MCF 10A (cell line): ENCODE measurements at regions of chr10 and their contacts with region 1.

Region 1: GRCh38 chr10:101214446-101215396 is 14.5 kb downstream of the LBX1 start:
- DNase-seq: peak; percentile 68
- H3K4me3 Mint-ChIP-seq: peak overlapping the region; percentile 75
- H3K27ac Mint-ChIP-seq: no peak overlapping the region
- H3K4me1 Mint-ChIP-seq: peaks cover 4% of the 10 kb centered on the region
- H3K27me3 Mint-ChIP-seq: peaks cover 49% of the 10 kb centered on the region
- CTCF ChIP-seq: peak; percentile 95

Region 2: GRCh38 chr10:100923580-100923979 is 291.1 kb before region 1 on chr10:
- CTCF ChIA-PET with region 1: no interaction called
- POLR2A ChIA-PET with region 1: no interaction called
- intact Hi-C with region 1: no loop called
- DNase-seq: no peak
- H3K4me3 Mint-ChIP-seq: no peak overlapping the region
- H3K27ac Mint-ChIP-seq: no peak overlapping the region
- H3K4me1 Mint-ChIP-seq: no peaks in the 10 kb centered on the region
- H3K27me3 Mint-ChIP-seq: no peaks in the 10 kb centered on the region
- CTCF ChIP-seq: no peak

Region 3: DNA sequence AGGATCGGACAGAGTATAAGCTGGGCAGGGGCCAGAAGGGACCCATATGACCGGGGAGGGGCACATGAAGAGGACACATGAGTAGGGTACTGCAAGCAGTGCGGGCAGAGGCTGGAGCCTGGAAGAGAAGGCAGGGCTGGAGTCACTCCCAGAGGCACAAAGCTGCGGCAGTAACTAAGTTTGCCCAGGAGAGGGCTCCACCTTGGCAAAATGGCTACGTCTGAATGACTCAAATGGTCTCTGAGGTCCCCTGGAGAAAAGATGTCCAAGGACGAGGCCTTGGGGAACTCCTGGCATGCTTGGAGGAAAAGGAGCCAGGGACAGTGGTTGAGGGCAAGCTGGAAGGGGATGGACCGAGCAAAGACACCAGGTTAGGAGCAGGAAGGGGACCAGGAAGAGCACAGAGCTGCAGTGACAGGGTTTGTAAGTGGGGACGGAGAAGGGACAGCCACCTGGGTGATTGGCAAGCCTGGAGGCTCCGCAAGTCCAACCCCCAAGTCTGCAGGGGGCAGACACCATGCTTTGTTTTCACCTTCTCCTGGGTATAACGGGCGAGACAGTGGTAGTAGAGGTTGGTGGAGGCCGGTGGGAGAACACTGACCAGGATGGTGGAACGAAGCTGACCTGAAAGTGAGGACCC is 57.6 kb after region 1 on chr10:
- CTCF ChIA-PET with region 1: interaction called, 17 read pairs
- POLR2A ChIA-PET with region 1: interaction called, 3 read pairs
- intact Hi-C with region 1: no loop called
- DNase-seq: peak; percentile 77
- H3K4me3 Mint-ChIP-seq: no peak overlapping the region
- H3K27ac Mint-ChIP-seq: no peak overlapping the region
- H3K4me1 Mint-ChIP-seq: peaks cover 19% of the 10 kb centered on the region
- H3K27me3 Mint-ChIP-seq: no peaks in the 10 kb centered on the region
- CTCF ChIP-seq: peak; percentile 73

Region 4: DNA sequence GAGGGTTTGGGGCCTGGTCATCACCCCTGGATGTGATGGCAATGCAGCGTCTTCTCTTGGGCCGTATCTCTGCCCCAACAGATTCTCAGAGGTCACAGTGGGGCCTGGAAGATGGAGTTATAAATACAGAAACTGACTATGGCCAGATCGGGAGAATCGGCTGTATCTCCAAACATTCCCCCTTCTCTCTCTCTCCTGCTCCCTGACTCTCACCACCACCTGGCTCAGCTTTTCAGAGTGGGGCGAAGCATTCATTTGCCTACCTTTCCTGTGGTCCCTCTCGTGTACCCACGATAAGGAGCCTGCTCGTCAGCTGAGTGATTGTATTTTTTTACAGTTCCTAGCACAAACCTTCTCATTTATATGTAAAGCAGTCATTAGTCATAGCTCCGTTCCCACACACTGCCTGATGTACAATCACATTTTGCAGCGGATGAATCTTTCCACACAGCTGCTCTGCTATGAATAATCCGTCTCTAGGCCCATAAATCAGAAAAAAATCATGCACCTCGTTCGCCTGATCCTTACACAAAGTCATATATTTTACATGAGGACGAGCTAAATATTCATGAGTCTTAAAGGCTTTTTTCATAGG is 116.0 kb after region 1 on chr10:
- CTCF ChIA-PET with region 1: interaction called, 16 read pairs
- POLR2A ChIA-PET with region 1: no interaction called
- intact Hi-C with region 1: no loop called
- DNase-seq: peak; percentile 37
- H3K4me3 Mint-ChIP-seq: no peak overlapping the region
- H3K27ac Mint-ChIP-seq: no peak overlapping the region
- H3K4me1 Mint-ChIP-seq: peaks cover 9% of the 10 kb centered on the region
- H3K27me3 Mint-ChIP-seq: peaks cover 26% of the 10 kb centered on the region
- CTCF ChIP-seq: no peak

Region 5: DNA sequence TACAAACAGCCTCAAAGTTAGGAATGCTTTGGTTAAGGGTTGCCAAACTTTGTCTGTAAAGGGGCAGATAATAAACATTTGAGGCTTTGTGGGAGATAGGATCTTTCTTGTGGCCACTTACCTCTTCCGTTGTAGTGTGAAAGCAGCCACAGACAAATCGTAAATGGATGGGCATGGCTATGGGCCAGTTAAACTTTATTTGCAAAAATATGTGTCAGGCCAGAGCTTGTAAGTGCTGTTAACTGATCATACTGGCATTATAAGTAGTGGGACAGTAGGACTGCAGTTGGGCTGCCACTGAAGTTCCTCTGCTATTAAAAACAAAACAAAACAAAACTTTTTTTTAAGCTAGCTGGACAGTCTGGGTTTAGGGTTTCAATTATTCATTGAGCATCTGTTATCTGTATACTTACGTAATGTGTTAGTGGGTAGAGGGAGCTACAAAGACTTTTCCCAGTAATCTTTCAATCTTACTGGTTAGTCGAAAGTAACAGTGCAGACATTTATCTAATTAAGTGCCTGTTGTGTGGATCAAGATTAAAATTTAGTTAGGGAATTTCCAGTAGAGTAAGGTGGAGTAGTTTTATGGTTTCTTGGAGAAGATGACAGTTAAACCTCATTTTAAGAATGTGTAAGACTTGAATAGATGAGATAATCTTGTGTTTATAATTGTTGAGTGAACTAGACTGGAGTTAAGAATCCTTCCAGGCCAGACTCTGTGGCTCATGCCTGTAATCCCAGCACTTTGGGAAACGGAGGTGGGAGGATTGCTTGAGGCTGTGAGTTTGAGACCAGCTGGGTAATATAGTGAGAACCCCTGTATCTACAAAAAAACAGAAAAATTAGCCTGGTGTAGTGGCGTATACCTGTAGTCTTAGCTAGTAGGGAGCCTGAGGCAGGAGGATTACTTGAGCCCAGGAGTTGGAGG is 239.3 kb after region 1 on chr10:
- CTCF ChIA-PET with region 1: interaction called, 13 read pairs
- POLR2A ChIA-PET with region 1: interaction called, 6 read pairs
- intact Hi-C with region 1: no loop called
- DNase-seq: no peak
- H3K4me3 Mint-ChIP-seq: no peak overlapping the region
- H3K27ac Mint-ChIP-seq: no peak overlapping the region
- H3K4me1 Mint-ChIP-seq: peaks cover 6% of the 10 kb centered on the region
- H3K27me3 Mint-ChIP-seq: no peaks in the 10 kb centered on the region
- CTCF ChIP-seq: no peak

Region 6: DNA sequence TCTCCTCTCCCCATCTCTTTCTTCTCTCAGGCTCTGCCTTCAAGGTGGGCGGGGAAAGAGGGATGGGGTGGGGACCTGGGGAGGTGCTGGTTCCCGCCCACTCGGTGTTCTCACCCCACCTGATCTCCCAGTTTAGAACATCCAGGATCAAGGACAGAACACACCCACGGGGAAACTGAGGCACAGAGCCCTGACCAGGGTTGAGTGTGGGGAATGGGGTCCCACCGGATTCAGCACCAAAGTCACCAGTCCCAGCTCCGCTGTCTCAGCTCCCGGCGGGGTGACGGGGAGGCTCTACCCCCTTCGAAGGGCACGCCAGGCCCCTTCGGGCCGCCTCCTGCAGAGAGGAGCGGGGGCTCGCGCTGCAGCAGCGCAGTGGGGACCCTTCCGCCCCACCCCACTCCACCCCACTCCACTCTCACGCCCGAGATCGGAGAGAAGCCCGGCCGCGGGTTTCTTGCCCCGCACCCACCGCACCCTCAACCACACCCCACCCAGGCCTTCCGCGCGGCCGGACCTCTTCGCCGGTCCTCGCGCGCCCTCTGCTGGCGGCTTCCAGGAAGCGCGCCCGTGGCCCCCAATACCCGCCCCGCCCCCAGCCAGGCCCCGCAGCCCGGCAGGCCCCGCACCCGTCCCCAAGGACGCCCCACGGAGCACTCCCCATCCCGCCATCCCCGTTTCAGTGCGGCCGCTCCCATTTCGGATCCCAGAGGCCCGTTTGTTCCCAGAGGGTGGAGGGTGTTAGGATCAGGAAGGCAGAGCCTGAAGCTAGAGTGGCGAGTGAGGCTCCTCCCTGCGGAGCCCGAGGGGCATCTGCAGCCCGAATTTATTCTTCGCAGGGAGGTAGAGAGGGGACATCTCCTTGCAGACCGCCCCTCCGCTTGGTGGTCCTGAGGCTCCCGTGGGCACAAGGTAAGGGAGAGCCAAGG is 355.4 kb after region 1 on chr10:
- CTCF ChIA-PET with region 1: interaction called, 118 read pairs
- POLR2A ChIA-PET with region 1: interaction called, 15 read pairs
- intact Hi-C with region 1: loop called (anchors 1 kb)
- DNase-seq: peak; percentile 69
- H3K4me3 Mint-ChIP-seq: peak overlapping the region; percentile 72
- H3K27ac Mint-ChIP-seq: no peak overlapping the region
- H3K4me1 Mint-ChIP-seq: peaks cover 5% of the 10 kb centered on the region
- H3K27me3 Mint-ChIP-seq: peaks cover 16% of the 10 kb centered on the region
- CTCF ChIP-seq: peak; percentile 94

Region 7: GRCh38 chr10:101782811-101783735 is 568.4 kb after region 1 on chr10 and contains the start of gene NPM3:
- CTCF ChIA-PET with region 1: interaction called, 47 read pairs
- POLR2A ChIA-PET with region 1: interaction called, 3 read pairs
- intact Hi-C with region 1: loop called (anchors 1 kb)
- DNase-seq: peak; percentile 83
- H3K4me3 Mint-ChIP-seq: peak within 1 kb of the TSS; percentile 100
- H3K27ac Mint-ChIP-seq: peak within 1 kb of the TSS; percentile 98
- H3K4me1 Mint-ChIP-seq: peaks cover 28% of the 10 kb centered on the region
- H3K27me3 Mint-ChIP-seq: no peaks in the 10 kb centered on the region
- CTCF ChIP-seq: no peak
- total RNA-seq, gene NPM3: 120 and 163 TPM in 2 replicates